Caco-2 (cell line): ENCODE measurements at regions of chr16 and their contacts with region 1.

Region 1: DNA sequence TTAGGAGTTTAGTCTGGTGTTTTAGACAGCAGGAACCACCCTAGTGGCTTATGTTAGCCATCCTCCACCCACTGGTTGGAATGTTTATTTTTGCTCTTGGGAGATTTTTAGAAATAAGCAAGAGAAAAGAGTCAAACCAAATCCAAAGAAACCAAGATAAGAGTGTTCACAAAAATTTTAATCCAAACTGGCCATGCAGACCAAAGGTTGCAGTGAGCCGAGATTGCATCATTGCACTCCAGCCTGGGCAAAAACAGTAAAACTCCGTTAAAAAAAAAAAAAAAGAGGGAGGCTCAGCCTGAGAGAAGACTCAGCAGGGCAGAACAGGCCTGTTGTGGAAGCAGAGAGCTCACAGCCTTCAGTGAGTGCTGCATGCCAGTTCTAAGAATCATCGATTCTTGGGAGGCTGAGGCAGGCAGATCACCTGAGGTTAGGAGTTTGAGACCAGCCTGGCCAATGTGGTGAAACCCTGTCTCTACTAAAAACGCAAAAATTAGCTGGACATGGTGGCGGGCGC is 12.2 kb upstream of the C16orf54 start:
- DNase-seq: peak; percentile 81
- H3K4me3 ChIP-seq: no peak overlapping the region
- H3K4me3 Mint-ChIP-seq: peak overlapping the region; percentile 22
- H3K27ac Mint-ChIP-seq: peak overlapping the region; percentile 78
- H3K4me1 ChIP-seq: peaks cover 36% of the 10 kb centered on the region
- H3K4me1 Mint-ChIP-seq: peaks cover 23% of the 10 kb centered on the region
- H3K27me3 ChIP-seq: no peaks in the 10 kb centered on the region
- H3K27me3 Mint-ChIP-seq: no peaks in the 10 kb centered on the region
- CTCF ChIP-seq: peak in 1 of 2 experiments; percentile 33

Region 2: GRCh38 chr16:29745121-29745852 is 12.7 kb before region 1 on chr16:
- CTCF ChIA-PET with region 1: no interaction called
- POLR2A ChIA-PET with region 1: no interaction called
- intact Hi-C with region 1: loop called (anchors 1 kb)
- DNase-seq: no peak
- H3K4me3 ChIP-seq: no peak overlapping the region
- H3K4me3 Mint-ChIP-seq: no peak overlapping the region
- H3K27ac Mint-ChIP-seq: no peak overlapping the region
- H3K4me1 ChIP-seq: peaks cover 16% of the 10 kb centered on the region
- H3K4me1 Mint-ChIP-seq: peaks cover 6% of the 10 kb centered on the region
- H3K27me3 ChIP-seq: no peaks in the 10 kb centered on the region
- H3K27me3 Mint-ChIP-seq: no peaks in the 10 kb centered on the region
- CTCF ChIP-seq: no peak